Mammary epithelial cell (primary cell): ENCODE measurements at regions of chr7 and their contacts with region 1.

Region 1: DNA sequence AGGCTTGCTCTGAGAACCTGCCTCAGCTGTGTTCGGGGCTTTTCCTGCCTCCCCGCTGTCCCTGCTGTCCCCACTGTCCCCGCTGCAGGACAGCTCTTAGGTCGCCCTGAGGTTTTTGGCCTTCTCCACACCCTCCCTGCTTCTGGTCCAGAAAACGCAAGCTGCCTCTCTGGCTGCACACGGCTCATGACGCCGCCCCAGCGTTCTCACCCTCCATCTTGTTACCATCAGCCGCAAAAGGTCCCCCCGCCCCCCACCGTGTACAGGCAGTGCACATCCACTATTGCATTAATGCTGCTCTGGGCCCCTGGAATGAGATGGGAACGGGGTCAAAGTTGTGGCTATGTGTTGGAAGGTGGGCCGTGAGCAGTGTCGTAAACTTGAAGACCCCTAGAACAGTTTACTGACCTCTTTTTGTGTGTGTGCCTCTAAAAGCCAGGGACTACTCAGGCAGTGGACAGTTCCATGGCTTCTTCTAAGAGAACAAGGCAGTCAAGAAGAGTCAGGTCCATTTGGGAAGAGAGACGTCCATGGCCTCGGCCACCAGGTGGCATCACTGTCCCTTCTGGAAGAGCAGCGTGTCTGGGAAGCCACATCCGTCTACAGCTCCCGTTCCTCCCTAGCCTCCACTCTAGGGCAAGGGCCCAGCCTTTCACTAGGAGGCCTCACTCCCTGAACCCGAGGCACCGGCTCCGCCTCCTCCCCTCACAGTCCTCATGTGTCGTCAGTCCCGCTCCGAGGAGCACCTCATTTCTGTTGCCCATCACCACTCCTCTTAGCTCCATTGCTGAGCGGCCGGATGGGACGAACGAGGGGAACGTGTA is 38.5 kb upstream of the MKRN1 start:
- DNase-seq: peak; percentile 76
- H3K4me3 ChIP-seq: no peak overlapping the region
- H3K27ac ChIP-seq: no peak overlapping the region
- H3K4me1 ChIP-seq: no peaks in the 10 kb centered on the region
- H3K27me3 ChIP-seq: no peaks in the 10 kb centered on the region
- CTCF ChIP-seq: peak; percentile 92 to 94

Region 2: GRCh38 chr7:140284062-140284461 is 233.7 kb before region 1 on chr7:
- CTCF ChIA-PET with region 1: no interaction called
- dilution Hi-C with region 1: no loop called
- in situ Hi-C with region 1: no loop called
- intact Hi-C with region 1: no loop called
- DNase-seq: no peak
- H3K4me3 ChIP-seq: no peak overlapping the region
- H3K27ac ChIP-seq: no peak overlapping the region
- H3K4me1 ChIP-seq: no peaks in the 10 kb centered on the region
- H3K27me3 ChIP-seq: peaks cover 2% of the 10 kb centered on the region
- CTCF ChIP-seq: no peak

Region 3: GRCh38 chr7:140557809-140558518 is 40.2 kb after region 1 on chr7:
- CTCF ChIA-PET with region 1: no interaction called
- dilution Hi-C with region 1: loop called (anchors 5 kb)
- in situ Hi-C with region 1: no loop called
- intact Hi-C with region 1: no loop called
- DNase-seq: no peak
- H3K4me3 ChIP-seq: no peak overlapping the region
- H3K27ac ChIP-seq: no peak overlapping the region
- H3K4me1 ChIP-seq: no peaks in the 10 kb centered on the region
- H3K27me3 ChIP-seq: no peaks in the 10 kb centered on the region
- CTCF ChIP-seq: no peak

Region 4: GRCh38 chr7:140653319-140654108 is 135.8 kb after region 1 on chr7:
- CTCF ChIA-PET with region 1: interaction called, 14 read pairs
- dilution Hi-C with region 1: no loop called
- in situ Hi-C with region 1: loop called (anchors 5 kb)
- intact Hi-C with region 1: loop called (anchors 1 kb)
- DNase-seq: peak; percentile 57
- H3K4me3 ChIP-seq: no peak overlapping the region
- H3K27ac ChIP-seq: no peak overlapping the region
- H3K4me1 ChIP-seq: peaks cover 16% of the 10 kb centered on the region
- H3K27me3 ChIP-seq: no peaks in the 10 kb centered on the region
- CTCF ChIP-seq: peak; percentile 86 to 91

Region 5: GRCh38 chr7:140983802-140984201 is 466.0 kb after region 1 on chr7:
- CTCF ChIA-PET with region 1: no interaction called
- dilution Hi-C with region 1: no loop called
- in situ Hi-C with region 1: loop called in 1 of 2 experiments (anchors 25 kb)
- intact Hi-C with region 1: no loop called
- DNase-seq: no peak
- H3K4me3 ChIP-seq: no peak overlapping the region
- H3K27ac ChIP-seq: no peak overlapping the region
- H3K4me1 ChIP-seq: no peaks in the 10 kb centered on the region
- H3K27me3 ChIP-seq: no peaks in the 10 kb centered on the region
- CTCF ChIP-seq: peak; percentile 22 to 24